Caco-2 (cell line): ENCODE measurements at regions of chr1 and their contacts with region 1.

Region 1: GRCh38 chr1:237938553-237938952 is 47.8 kb upstream of the ZP4 start:
- DNase-seq: peak in 1 of 2 experiments; percentile 28
- H3K4me3 ChIP-seq: no peak overlapping the region
- H3K4me3 Mint-ChIP-seq: no peak overlapping the region
- H3K27ac Mint-ChIP-seq: no peak overlapping the region
- H3K4me1 ChIP-seq: no peaks in the 10 kb centered on the region
- H3K4me1 Mint-ChIP-seq: no peaks in the 10 kb centered on the region
- H3K27me3 ChIP-seq: no peaks in the 10 kb centered on the region
- H3K27me3 Mint-ChIP-seq: peaks cover 8% of the 10 kb centered on the region
- CTCF ChIP-seq: peak in 1 of 2 experiments; percentile 2

Region 2: DNA sequence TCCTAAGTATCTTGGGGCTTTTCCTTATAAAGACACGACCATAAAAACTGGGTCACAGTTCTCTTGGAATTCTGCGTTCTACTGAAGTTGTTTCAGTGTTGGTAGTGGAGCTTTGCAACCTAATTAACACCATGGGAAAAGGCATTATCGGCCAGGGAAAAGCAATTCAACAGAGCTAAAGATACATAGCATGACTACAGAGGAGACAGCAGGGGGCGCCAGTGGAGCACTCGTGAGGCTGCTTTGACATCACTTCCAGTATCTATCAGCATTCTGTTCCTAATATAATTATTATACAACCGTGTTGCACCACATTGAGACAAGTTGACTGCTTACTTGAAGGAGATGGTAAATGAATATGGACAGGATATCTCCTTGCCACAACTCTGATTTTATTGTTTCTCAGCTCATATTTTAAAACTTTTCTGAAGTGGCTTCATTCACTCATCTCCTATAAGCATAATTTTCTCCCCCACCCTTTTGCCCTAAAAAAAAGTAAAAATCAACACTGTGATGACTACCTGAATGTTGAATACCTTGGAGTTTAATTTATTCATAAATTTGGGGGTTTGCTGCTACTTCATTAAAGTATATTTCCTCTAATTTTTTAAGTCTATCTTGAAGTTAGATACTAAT is 87.2 kb before region 1 on chr1:
- CTCF ChIA-PET with region 1: no interaction called
- POLR2A ChIA-PET with region 1: no interaction called
- intact Hi-C with region 1: loop called (anchors 5 kb)
- DNase-seq: peak in 1 of 2 experiments; percentile 52
- H3K4me3 ChIP-seq: no peak overlapping the region
- H3K4me3 Mint-ChIP-seq: no peak overlapping the region
- H3K27ac Mint-ChIP-seq: no peak overlapping the region
- H3K4me1 ChIP-seq: no peaks in the 10 kb centered on the region
- H3K4me1 Mint-ChIP-seq: no peaks in the 10 kb centered on the region
- H3K27me3 ChIP-seq: no peaks in the 10 kb centered on the region
- H3K27me3 Mint-ChIP-seq: peaks cover 11% of the 10 kb centered on the region
- CTCF ChIP-seq: peak; percentile 31 to 74

Region 3: DNA sequence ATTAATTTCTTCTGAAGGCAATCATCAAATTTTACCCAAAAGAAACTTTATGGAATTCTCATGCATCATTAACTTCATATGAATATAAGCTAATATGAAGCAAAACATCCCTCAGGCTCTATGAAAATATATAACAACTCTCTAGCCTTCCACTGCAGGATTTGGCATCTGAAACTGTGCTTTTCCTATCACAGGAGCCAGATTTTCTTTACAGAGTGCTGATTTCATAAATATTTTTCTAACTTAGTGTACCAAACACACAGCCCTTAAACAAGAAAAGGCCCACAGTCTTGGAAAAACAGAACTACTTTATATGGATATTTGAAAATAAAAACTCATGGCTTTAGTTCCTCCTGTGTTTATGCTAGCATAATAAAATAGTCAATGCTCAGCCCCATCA is 888.3 kb after region 1 on chr1:
- CTCF ChIA-PET with region 1: no interaction called
- POLR2A ChIA-PET with region 1: no interaction called
- intact Hi-C with region 1: no loop called
- DNase-seq: no peak
- H3K4me3 ChIP-seq: no peak overlapping the region
- H3K4me3 Mint-ChIP-seq: no peak overlapping the region
- H3K27ac Mint-ChIP-seq: no peak overlapping the region
- H3K4me1 ChIP-seq: no peaks in the 10 kb centered on the region
- H3K4me1 Mint-ChIP-seq: no peaks in the 10 kb centered on the region
- H3K27me3 ChIP-seq: no peaks in the 10 kb centered on the region
- H3K27me3 Mint-ChIP-seq: peaks cover 2% of the 10 kb centered on the region
- CTCF ChIP-seq: no peak